ENCODE measurements at regions of chr19 and their contacts with region 1.

Region 1: DNA sequence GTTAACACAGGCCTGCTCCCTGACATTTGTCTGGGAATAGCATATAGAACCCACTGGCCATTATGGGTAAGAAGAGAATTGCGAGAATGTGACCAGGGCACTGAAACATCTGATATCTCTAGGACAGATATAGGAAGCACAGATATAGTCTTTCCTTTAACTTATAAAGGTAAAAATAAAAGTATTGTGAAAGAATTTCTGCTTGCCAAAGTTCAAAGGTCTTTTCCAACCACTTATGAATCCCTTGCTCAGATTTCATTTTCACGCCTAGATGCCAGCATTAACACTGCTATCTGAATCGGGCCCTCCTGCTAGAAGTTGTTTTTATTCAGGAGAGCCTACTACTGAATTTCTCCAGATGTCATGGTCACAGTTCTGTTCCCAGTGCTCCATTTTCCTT is 27.7 kb downstream of the BBC3 start:
- DNase-seq: no peak
- ATAC-seq: no peak

Region 2: GRCh38 chr19:46404055-46404752 is 799.0 kb before region 1 on chr19:
- intact Hi-C with region 1: loop called (anchors 5 kb)
- DNase-seq: peak; percentile 77
- ATAC-seq: peak; percentile 79

Region 3: DNA sequence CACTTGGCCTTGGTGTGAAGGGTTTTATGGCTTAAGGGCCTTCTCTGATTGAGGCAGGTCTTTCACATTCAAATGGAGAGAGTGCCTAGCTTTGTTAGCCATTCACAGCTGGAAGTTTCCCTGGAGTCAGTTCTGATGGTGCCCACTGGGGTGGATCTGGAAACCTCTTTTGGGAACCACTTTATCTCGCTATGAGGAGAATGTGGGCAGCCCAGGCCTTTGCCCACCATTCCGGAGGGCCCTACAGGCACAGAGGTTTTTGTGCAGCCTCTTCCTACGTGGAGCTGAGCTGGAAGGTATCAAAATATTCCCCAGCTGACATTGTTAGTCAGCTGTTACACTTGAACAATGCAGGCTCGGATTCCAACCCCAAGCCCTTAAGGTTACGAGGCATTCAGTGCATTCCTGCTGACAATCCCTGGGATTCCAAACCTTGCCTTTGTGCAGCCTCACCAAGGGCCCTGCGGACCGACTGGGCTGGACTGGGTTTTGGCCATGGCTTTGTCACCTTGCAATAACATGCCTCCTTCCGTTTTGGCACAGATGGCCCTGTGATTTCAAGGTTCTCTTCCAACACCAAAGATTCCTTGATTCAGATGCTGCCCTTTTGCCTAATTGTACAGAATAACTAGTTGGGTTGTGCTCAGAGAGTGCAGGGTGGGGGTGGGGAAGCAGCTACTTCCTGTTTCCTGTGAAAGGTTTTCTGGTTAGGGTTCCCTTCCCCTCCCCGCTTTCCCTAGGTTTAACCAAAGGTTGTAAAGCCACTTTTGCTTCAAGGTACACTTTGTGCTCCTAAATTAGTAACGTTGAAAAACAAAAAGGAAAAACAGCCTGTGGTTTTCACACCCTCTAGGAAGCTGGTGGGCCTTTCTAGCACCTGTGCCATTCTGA is 45.6 kb before region 1 on chr19:
- intact Hi-C with region 1: loop called (anchors 5 kb)
- DNase-seq: no peak
- ATAC-seq: peak; percentile 65

Measured in sciatic nerve (tissue), 2 donors.